GM13977 (cell line): ENCODE measurements at regions of chr13 and their contacts with region 1.

Region 1: GRCh38 chr13:92573467-92574057 is 653.0 kb upstream of the GPC6 start:
- DNase-seq: peak; percentile 17
- CTCF ChIP-seq: peak; percentile 42

Region 2: DNA sequence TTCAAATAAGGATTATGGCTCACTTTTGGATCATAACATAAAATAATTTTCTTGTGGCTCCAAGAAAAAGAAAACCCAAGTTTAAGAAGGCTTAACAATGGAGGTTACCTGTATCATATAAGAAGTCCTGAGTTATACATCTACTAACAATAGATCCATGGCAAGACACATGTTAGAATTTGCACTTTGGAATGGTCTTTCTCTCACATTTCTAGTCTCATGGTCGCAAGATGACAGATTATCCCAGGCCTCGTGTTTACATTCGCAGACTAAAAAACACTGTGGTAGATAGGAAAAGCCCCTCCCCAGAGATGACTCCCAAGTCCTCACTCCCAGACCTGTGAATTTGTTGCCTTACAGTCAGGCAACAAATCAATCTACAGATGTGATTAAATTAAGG is 93.2 kb before region 1 on chr13:
- in situ Hi-C with region 1: no loop called
- DNase-seq: no peak
- CTCF ChIP-seq: no peak

Region 3: DNA sequence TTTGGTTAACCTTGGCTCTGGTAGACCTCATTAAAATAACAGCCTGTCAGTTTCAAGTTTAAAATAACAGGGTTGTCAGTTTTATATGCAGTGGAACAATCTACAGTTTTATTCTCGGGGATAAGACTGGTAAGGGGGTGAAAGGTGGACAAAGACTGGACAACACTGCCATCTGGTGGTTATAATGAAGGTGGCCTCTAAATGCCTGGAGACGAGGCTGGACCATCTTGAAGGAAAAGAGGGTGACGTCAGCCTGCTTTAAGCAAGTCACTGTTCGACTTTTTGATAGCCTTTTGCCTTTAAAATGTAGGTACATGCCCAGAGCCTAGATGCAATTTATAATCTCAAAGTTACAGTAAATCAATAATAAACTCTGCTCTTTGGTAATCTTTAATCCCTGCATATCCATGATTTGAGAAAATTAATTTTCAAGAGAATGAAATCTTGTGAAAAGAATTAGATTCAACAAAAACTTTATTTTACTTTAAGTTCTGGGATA is 1788.9 kb after region 1 on chr13:
- in situ Hi-C with region 1: loop called (anchors 25 kb)
- DNase-seq: peak; percentile 68
- CTCF ChIP-seq: peak; percentile 80